Mucosa of descending colon (tissue), 3 donors: ENCODE measurements at regions of chr12 and their contacts with region 1.

Region 1: DNA sequence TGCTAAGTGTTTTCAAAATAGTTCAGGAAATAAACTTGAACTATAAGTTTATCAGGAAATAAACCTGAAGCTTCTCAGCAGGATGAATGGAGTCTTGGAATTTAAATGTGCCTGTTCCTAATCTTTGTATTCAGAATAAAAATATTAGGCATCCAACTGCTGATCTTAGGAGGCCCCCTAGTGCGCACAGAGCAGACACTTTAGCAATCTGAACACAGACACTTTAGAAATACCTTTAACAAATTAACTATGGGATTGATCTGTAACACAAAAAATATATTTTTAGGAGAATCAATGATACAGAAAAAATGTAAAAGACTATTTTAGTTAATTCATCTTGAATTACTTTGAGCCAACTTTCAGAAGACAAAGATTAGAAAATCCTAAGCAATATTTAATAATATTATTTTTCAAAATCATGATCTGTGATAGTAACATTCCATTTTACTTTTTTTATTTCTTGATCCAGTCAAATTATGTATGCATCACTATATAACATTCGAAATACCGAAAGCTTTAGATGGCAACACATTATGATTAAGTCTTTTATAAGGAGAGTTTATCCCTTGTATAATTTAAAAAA is 80.9 kb downstream of the SLC41A2 start:
- DNase-seq: peak in 2 of 3 donors; percentile 23 to 35
- ATAC-seq: no peak
- H3K4me3 ChIP-seq: no peak overlapping the region
- H3K4me1 ChIP-seq: no peaks in the 10 kb centered on the region
- CTCF ChIP-seq: no peak

Region 2: GRCh38 chr12:104201238-104202001 is 675.8 kb before region 1 on chr12:
- intact Hi-C with region 1: loop called in 1 of 2 experiments (anchors 10 kb)
- DNase-seq: peak in 1 of 3 donors; percentile 55
- ATAC-seq: peak; percentile 56
- H3K4me3 ChIP-seq: no peak overlapping the region
- H3K4me1 ChIP-seq: no peaks in the 10 kb centered on the region
- CTCF ChIP-seq: peak; percentile 57

Region 3: DNA sequence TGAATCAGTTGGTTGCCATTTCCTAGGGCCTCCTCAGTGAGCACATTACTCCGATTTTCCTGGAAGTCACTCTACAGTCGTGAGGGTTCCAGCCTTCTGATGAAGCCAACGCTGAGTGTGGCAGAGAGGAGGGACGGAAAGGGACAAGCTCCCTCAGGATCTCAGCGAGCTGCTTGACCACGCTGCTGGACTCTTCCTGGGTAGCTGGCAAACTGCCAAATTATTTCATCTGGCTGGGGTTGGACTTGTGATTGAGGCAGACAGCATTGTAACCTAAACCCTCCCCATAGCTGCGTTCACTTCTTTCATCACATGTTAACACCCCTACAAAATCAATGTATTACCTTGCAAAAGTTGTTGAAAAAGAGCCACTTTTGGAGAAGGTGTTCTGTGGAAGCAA is 490.0 kb before region 1 on chr12:
- intact Hi-C with region 1: loop called in 1 of 2 experiments (anchors 5 kb)
- DNase-seq: no peak
- ATAC-seq: no peak
- H3K4me3 ChIP-seq: no peak overlapping the region
- H3K4me1 ChIP-seq: no peaks in the 10 kb centered on the region
- CTCF ChIP-seq: no peak

Region 4: DNA sequence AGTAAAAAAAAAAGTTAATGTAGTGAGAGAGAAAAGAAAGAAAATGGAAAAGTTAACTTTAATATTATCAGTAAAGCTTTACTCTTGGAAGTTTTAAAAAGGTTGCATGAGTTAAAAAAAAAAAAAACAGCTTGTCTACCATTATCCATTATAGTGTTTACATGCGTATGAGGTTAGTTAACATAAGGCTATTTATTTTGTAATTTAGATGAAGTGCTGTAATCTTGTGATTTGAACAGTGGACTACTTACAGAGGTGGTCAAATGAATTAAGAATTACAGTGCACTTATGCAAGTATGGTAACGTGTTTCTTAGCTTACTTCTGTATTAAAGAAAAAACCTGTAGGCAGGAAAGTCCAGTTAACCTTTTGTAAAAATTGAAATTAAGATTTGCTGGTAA is 261.0 kb after region 1 on chr12:
- intact Hi-C with region 1: no loop called
- DNase-seq: no peak
- ATAC-seq: no peak
- H3K4me3 ChIP-seq: no peak overlapping the region
- H3K4me1 ChIP-seq: no peaks in the 10 kb centered on the region
- CTCF ChIP-seq: no peak